Activated CD4-positive, alpha-beta memory T cell treated with anti-CD3 and anti-CD28 coated beads for 36 hours (primary cell): ENCODE measurements at regions of chr12 and their contacts with region 1.

Region 1: GRCh38 chr12:3803865-3804472 is 51.1 kb upstream of the CRACR2A start:
- DNase-seq: peak; percentile 81
- H3K4me3 Mint-ChIP-seq: no peak overlapping the region
- H3K27ac Mint-ChIP-seq: no peak overlapping the region
- H3K4me1 Mint-ChIP-seq: peaks cover 9% of the 10 kb centered on the region
- H3K27me3 Mint-ChIP-seq: no peaks in the 10 kb centered on the region

Region 2: DNA sequence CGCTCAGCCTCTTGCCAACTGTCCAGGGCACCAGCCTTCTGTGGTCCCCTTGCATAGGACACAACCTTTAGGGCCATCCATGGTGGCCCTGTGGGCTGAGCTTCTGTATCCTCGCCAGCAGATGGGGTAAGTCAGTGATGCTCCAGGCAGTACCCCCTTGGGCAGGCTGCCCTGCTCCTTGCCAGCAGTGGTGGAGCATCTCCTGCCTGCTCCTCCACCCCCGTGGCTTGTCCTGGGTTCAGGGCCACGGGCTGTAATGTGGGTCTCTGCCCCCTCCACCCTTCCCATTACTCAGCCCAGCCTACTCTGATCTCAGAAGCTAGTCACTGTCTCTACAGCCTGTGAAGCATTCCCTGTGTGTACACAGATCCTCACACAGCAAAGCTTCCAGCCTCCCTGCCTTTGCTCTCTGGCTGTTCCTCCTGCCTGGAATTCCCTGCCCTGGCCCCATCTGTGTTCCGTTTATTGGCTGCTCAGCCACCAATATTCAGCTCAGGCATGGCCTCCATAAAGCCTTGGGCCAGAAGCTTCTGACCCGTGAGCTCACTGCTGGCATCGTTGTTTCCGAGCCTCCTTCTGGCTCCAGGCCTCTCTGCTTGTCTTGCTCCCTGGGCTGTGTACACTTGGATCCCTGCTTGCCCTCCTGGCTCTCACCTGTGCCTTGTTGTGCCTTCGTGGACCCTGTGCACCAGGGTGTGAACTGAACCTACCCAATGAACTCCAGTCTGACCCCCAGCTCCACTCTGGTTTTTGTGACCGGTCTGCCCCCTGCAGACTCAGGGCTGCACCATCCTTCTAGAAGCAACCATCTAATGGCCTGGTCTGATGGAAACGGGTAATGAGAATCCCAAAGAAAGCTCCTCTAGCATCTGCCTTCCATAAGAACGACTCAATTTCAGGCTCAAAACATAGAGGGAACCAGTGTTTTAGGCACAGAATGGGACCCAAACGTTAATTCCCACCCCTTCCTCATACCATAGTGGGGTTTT is 490.0 kb before region 1 on chr12:
- CTCF ChIA-PET with region 1: interaction called, 12 read pairs
- POLR2A ChIA-PET with region 1: no interaction called
- intact Hi-C with region 1: no loop called
- DNase-seq: peak; percentile 24
- H3K4me3 Mint-ChIP-seq: no peak overlapping the region
- H3K27ac Mint-ChIP-seq: no peak overlapping the region
- H3K4me1 Mint-ChIP-seq: no peaks in the 10 kb centered on the region
- H3K27me3 Mint-ChIP-seq: peaks cover 10% of the 10 kb centered on the region